Lower lobe of right lung (tissue), 2 donors: ENCODE measurements at regions of chr7 and their contacts with region 1.

Region 1: GRCh38 chr7:70856866-70857630 is 274.9 kb upstream of the GALNT17 start:
- DNase-seq: peak; percentile 62
- ATAC-seq: no peak
- H3K4me3 ChIP-seq: no peak overlapping the region
- H3K27ac ChIP-seq: no peak overlapping the region
- H3K4me1 ChIP-seq: no peaks in the 10 kb centered on the region
- H3K27me3 ChIP-seq: no peaks in the 10 kb centered on the region
- CTCF ChIP-seq: peak; percentile 87

Region 2: DNA sequence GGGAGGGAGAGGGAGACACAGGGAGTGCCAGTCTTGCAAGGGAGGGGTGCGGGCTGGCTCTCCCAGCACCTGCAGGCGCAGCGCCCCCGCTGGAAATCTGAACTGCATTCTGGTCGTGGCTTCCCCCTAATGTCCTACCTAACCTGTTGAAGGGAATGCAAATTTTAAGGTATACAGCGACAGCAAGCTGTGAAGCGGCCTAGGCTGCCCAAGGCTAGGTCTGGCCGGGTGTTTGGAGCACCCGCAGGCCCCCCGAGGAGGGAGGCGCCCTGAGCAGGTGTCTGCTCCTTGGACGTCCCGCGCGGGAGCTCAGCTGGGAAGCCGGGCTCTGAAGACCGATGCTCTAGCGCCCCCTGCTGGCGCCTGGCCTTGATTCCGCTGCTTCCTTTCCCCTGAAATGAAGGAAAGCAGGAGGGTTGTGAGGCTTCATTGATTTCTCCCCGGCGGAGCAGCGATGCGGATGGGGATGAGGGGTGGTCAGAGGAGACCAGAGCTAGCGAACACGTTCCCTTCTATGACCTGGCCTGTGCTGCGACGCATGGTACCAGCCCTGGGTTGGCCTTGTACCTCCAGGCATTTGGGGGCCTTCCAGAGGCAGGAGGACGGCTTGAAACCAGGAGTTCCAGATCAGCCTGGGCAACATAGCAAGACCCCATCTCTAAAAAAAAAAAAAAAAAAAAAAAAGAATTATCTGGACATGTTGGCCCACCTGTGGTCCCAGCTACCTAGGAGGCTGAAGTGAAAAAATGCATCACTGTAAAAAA is 876.2 kb after region 1 on chr7:
- intact Hi-C with region 1: loop called (anchors 10 kb)
- DNase-seq: peak; percentile 83
- ATAC-seq: peak; percentile 75 to 82
- H3K4me3 ChIP-seq: peak overlapping the region; percentile 23
- H3K27ac ChIP-seq: no peak overlapping the region
- H3K4me1 ChIP-seq: peaks cover 6% of the 10 kb centered on the region
- H3K27me3 ChIP-seq: peaks cover 5% of the 10 kb centered on the region
- CTCF ChIP-seq: peak; percentile 93